AG04450 (cell line): ENCODE measurements at regions of chr9 and their contacts with region 1.

Region 1: GRCh38 chr9:129131300-129132145 is 20.3 kb downstream of the PTPA start:
- DNase-seq: no peak
- H3K4me3 ChIP-seq: no peak overlapping the region
- H3K27ac ChIP-seq: peak overlapping the region; percentile 3
- H3K27me3 ChIP-seq: no peaks in the 10 kb centered on the region
- CTCF ChIP-seq: peak; percentile 99

Region 2: GRCh38 chr9:129100383-129101169 is 30.9 kb before region 1 on chr9:
- CTCF ChIA-PET with region 1: no interaction called
- POLR2A ChIA-PET with region 1: no interaction called
- DNase-seq: no peak
- H3K4me3 ChIP-seq: no peak overlapping the region
- H3K27ac ChIP-seq: no peak overlapping the region
- H3K27me3 ChIP-seq: no peaks in the 10 kb centered on the region
- CTCF ChIP-seq: no peak

Region 3: DNA sequence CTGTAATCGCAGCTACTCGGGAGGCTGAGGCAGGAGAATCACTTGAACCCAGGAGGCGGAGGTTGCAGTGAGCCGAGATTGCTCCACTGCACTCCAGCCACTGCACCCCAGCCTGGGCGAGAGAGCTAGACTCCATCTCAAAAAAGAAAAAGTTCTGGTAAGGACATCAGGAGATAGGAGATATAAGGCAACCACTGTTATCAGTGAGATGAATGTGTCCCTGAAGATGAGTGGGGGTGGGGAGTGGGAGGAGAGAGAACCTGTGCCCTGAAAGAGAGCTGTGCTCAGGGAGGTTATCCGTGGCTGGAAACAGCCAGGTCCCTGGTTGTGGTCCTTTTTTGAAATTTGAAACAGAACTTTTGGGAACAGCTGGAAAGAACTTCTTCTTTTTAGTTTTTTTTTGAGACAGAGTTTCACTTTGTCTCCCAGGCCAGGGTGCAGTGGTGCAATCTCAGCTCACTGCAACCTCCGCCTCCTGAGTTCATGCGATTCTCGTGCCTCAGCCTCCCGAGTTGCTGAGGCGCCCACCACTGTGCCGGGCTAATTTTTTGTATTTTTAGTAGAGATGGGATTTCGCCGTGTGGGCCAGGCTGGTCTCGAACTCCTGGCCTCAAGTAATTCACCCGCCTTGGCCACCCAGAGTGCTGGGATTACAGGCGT is 17.7 kb before region 1 on chr9:
- CTCF ChIA-PET with region 1: interaction called, 14 read pairs
- POLR2A ChIA-PET with region 1: no interaction called
- DNase-seq: no peak
- H3K4me3 ChIP-seq: no peak overlapping the region
- H3K27ac ChIP-seq: no peak overlapping the region
- H3K27me3 ChIP-seq: no peaks in the 10 kb centered on the region
- CTCF ChIP-seq: no peak

Region 4: DNA sequence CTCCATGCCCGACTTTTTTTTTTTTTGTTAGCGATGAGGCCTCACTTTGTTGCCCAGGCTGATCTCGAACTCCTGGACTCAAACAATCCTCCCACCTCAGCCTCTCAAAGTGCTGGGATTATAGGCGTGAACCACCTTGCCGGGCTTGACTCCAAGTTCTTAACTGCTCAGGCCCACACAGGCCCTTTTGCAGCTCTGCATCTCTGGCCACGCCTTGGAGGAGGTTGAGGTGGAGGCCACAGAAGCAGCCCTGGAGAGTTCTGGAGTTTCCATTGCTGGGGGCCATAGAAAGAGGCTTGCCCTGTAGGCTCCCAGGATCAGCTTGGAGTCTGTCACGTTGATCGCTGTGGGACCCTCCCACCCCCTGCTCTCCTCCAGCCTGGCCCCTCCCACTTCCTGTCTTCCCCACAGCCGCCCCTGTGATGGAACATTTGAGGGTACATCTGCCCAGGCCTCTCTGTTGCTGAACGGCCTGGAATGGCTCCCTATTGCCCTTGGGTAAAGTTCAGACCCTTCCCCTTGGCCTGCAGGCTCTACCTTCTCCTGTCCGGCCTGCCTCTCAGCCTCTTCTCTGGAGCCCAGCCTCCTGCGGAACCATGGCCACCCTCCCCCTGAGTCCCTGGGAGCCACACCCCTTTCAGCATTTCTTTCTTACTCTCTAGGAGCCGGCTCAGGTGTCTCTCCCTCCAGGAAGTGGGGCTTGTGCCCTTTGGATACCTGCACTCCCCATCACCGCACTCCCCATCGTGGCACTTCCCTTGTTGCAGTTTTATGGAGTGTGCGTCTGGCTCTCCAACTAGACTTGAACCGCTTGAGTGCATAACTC is 76.9 kb after region 1 on chr9:
- CTCF ChIA-PET with region 1: no interaction called
- POLR2A ChIA-PET with region 1: no interaction called
- DNase-seq: no peak
- H3K4me3 ChIP-seq: no peak overlapping the region
- H3K27ac ChIP-seq: no peak overlapping the region
- H3K27me3 ChIP-seq: no peaks in the 10 kb centered on the region
- CTCF ChIP-seq: no peak

Region 5: DNA sequence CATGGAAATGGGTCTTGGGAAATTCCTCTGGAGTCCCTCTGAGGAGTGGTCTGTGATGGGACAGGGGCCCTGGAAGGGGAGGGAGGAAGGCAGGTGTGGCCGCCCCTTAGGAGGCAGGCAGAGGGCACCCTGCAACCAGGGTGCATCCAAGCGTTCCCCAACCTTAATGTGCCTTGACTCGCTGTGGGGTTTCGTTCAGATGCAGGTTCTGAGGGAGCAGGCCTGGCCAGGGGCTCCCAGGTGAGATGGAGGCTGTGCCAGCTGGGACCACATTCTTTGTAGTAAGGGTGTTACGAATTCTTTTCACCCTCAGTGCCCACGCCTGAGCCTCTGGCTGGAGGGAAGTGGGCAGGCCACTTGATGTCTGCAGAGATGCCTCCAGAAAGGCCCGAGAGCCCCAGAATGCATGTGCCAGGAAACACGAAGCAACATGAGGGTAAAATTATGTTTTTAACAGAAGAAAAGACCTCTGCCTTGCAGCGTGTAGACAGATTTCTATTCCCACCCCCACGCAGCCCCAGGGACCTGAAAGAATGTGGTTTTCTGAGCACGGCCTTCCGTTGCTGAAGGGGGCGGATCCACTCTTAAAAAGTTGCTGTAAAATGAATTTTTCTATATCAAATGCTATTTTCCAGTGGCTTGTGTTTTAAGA is 197.0 kb after region 1 on chr9:
- CTCF ChIA-PET with region 1: no interaction called
- POLR2A ChIA-PET with region 1: no interaction called
- DNase-seq: no peak
- H3K4me3 ChIP-seq: no peak overlapping the region
- H3K27ac ChIP-seq: no peak overlapping the region
- H3K27me3 ChIP-seq: no peaks in the 10 kb centered on the region
- CTCF ChIP-seq: no peak

Region 6: DNA sequence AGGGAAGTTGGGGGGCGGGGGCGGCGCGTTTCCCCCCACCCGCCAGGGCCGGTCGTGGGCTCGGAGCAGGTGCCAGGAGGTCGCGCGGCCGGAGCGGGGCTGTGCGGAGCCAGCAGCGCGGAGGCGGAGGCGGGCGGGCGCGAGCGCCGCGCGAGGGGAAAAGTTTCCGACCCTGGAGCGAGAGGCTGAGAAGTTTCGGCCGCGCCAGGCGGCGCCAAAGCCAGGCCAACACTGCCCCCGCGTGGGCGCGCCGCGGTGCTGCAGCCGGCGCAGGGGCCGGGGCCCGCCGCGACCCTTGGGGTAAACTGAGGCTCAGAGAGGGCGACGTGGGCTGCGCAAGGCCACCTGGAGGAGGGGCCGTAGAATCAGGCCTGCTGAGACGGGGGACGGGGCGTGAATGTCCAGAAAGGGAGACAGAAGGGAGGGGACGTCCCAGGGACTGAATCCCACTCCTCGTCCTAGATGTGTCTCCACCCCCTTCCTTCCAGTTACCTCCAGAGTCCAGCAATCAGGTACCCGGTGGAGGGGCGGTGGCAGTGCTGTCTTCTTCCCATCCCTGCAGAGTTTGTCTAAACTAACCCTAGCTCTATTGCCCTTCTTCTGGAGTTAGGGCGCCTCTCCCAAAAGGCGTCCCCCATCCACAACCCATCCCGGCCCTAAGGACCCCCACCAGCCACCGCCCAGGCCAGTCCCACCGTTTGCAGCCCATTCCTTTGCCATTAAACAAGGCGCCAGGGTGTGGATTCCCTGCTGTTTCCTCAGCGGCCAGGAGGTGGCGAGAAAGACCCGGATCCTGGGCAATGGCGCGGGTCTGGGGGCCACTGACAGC is 479.2 kb after region 1 on chr9:
- CTCF ChIA-PET with region 1: interaction called, 15 read pairs
- POLR2A ChIA-PET with region 1: no interaction called
- DNase-seq: no peak
- H3K4me3 ChIP-seq: peak overlapping the region; percentile 68
- H3K27ac ChIP-seq: peak overlapping the region; percentile 47
- H3K27me3 ChIP-seq: no peaks in the 10 kb centered on the region
- CTCF ChIP-seq: peak; percentile 80

Region 7: DNA sequence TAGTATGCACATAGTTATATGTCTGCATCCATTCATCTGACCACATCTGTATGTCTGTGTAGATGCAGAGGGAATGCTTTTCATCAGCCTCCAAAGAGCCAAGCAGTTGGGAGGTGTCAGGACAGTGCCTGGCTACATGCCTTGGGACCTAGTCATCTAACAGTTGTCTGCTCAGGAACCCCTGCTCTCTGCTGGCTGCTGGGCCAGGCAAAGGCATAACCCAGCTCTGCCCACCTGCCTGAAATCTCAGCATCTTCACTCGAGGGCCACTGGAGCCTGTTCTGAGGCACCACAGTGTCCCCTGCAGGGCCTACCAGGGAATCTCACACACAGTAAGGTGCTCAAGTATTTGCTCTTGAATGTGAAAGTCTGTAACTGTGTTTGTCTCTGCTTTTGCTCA is 485.6 kb after region 1 on chr9:
- CTCF ChIA-PET with region 1: interaction called, 302 read pairs
- POLR2A ChIA-PET with region 1: interaction called, 4 read pairs
- DNase-seq: peak; percentile 67
- H3K4me3 ChIP-seq: no peak overlapping the region
- H3K27ac ChIP-seq: no peak overlapping the region
- H3K27me3 ChIP-seq: no peaks in the 10 kb centered on the region
- CTCF ChIP-seq: peak; percentile 73